ENCODE measurements at regions of chr1 and their contacts with region 1.

Region 1: GRCh38 chr1:109773146-109773899 is 9.6 kb upstream of the EPS8L3 start:
- DNase-seq: peak; percentile 75
- H3K27ac ChIP-seq: no peak overlapping the region
- CTCF ChIP-seq: peak; percentile 85

Region 2: GRCh38 chr1:109263597-109264398 is 509.5 kb before region 1 on chr1:
- CTCF ChIA-PET with region 1: no interaction called
- POLR2A ChIA-PET with region 1: no interaction called
- DNase-seq: peak; percentile 86
- H3K27ac ChIP-seq: peak overlapping the region; percentile 92
- CTCF ChIP-seq: peak; percentile 97

Region 3: GRCh38 chr1:109548321-109549267 is 224.7 kb before region 1 on chr1 and contains the start of gene GNAI3:
- CTCF ChIA-PET with region 1: interaction called, 33 read pairs
- POLR2A ChIA-PET with region 1: no interaction called
- DNase-seq: peak; percentile 96
- H3K27ac ChIP-seq: peak within 1 kb of the TSS; percentile 84
- CTCF ChIP-seq: no peak

Region 4: GRCh38 chr1:109739738-109740660 is 33.3 kb before region 1 on chr1:
- CTCF ChIA-PET with region 1: interaction called, 14 read pairs
- POLR2A ChIA-PET with region 1: no interaction called
- DNase-seq: peak; percentile 66
- H3K27ac ChIP-seq: peak overlapping the region; percentile 38; the same call in 1 of the 2 replicates
- CTCF ChIP-seq: no peak

Region 5: DNA sequence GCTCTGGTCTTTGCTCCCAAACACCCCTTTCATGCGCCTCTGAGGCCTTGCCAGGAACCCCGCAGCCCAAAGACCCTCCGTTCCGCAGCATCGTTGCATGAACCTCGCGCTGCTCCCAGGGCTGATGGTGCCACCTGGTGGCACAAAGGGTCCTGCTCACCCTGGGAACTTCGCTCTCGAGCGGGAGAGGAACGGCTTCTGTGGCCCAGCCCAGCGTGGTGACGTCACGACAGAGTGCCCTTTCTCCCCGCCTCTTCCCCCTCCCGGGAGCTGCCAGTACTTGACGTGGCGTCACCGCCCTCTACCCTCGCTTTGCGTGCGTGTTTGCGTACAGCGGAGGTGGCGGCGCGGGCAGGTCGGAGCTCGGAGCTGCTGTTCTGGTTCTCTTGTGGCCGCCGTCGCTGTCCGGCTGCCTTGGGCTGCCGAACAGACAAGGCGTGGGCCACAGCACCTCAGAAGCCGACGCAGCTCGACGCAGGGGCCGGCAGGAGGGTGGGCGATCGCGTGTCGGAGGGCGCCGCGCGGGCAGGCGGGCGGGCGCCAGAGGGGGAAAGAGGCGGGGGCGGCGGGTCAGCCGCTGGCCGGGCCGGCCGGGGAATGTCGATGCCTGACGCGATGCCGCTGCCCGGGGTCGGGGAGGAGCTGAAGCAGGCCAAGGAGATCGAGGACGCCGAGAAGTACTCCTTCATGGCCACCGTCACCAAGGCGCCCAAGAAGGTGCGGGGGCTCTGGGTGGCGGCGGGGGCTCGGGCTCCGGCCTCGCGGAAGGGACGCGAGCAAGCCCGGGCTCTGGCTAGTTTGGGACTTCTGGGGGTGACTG is 211.3 kb after region 1 on chr1 and contains the start of gene AHCYL1:
- CTCF ChIA-PET with region 1: interaction called, 239 read pairs
- POLR2A ChIA-PET with region 1: interaction called, 3 read pairs
- DNase-seq: peak; percentile 99
- H3K27ac ChIP-seq: peak within 1 kb of the TSS; percentile 85
- CTCF ChIP-seq: peak; percentile 95

Measured in RWPE1 (cell line).